ENCODE measurements at regions of chr6 and their contacts with region 1.

Region 1: GRCh38 chr6:30821862-30822782 is 62.2 kb upstream of the DDR1 start:
- DNase-seq: no peak
- H3K4me3 ChIP-seq: no peak overlapping the region
- H3K27ac ChIP-seq: peak overlapping the region in 5 of 59 donors; percentile 13 to 51 (median 26)
- H3K27me3 ChIP-seq: no peaks in the 10 kb centered on the region
- CTCF ChIP-seq: peak; percentile 41 to 79 (median 62)

Region 2: DNA sequence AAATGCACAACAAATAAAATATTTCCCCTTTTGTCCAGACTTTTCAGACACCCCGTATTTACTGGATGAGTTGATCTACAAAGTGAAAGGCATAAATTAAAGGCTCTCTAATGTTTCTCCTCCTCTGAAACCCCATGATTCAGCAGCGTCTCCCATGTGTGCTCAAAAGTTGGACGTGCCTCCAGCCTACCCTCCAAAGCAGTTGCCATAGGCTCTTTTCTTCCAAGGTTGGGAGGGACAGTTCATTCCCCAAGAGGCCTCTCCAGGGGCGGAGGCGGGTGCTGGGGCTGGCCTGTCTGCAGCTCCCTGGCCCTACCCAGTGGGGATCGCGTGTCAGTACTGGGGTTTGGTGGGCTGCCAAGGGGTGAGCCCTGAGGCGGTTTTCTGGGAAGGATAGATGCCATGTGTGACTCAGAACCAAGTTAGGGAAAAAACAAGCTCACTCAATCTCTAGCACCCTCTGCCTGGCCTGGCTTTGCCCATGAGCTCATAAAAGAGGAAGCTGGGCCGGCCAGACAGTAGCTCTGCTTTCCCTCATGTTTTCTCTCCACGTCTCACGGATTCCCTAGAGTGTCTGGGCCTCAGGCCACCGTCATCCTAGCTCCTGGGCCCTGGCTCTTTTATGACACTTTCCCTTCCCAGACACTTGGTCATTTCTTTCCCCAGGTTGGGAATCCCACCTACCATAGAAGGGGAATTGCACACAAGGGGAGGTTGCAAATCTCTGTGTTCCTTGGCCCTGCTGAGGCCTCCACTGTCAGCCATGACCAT is 69.8 kb before region 1 on chr6:
- intact Hi-C with region 1: no loop called
- DNase-seq: peak in 6 of 10 donors; percentile 35 to 70 (median 54)
- H3K4me3 ChIP-seq: no peak overlapping the region
- H3K27ac ChIP-seq: peak overlapping the region in 33 of 59 donors; percentile 11 to 78 (median 53)
- H3K27me3 ChIP-seq: no peaks in the 10 kb centered on the region
- CTCF ChIP-seq: no peak

Region 3: GRCh38 chr6:30781743-30782424 is 40.2 kb before region 1 on chr6:
- intact Hi-C with region 1: loop called in 1 of 2 experiments (anchors 5 kb)
- DNase-seq: peak; percentile 80 to 92 (median 88)
- H3K4me3 ChIP-seq: peak overlapping the region in 58 of 59 donors; percentile 13 to 65 (median 40)
- H3K27ac ChIP-seq: peak overlapping the region; percentile 71 to 98 (median 90)
- H3K27me3 ChIP-seq: no peaks in the 10 kb centered on the region
- CTCF ChIP-seq: peak in 18 of 56 donors; percentile 7 to 38 (median 22)

Region 4: DNA sequence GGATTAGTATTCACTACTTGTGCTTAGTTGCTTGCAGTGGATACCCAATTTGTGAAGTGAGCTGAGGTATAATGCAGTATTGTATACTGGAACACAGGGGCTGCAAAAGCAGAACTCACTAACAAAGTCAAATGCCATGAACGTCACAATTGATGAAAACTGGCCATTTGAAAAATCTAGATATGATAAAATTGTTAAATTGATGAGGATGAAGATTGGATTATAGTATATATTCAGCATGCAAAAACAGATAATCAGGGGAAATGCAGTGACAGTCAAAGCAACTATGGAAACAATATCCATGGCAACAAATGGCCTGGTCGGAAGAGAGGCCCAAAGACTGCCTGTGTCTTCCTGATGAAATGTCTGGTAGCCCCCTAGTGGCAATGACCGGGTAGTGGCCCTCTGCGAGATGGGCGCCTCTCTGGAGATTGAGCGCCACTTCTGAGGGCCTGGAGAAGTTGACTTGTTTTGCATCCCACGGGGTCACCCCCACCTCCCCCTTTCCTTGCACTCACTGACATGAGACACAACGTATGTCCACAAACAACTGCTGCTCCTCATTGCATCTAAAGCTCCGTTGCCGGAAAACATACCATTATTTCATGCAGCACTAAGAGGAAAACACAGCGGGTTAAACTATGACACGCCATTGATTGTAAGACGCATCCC is 246.7 kb after region 1 on chr6:
- intact Hi-C with region 1: loop called in 1 of 2 experiments (anchors 5 kb)
- DNase-seq: peak; percentile 21 to 91 (median 85)
- H3K4me3 ChIP-seq: peak overlapping the region in 34 of 59 donors; percentile 0 to 50 (median 24)
- H3K27ac ChIP-seq: peak overlapping the region; percentile 68 to 98 (median 90)
- H3K27me3 ChIP-seq: no peaks in the 10 kb centered on the region
- CTCF ChIP-seq: peak; percentile 79 to 98 (median 95)

Measured in dorsolateral prefrontal cortex (tissue), 120 donors.